ENCODE measurements at regions of chr5 and their contacts with region 1.

Region 1: DNA sequence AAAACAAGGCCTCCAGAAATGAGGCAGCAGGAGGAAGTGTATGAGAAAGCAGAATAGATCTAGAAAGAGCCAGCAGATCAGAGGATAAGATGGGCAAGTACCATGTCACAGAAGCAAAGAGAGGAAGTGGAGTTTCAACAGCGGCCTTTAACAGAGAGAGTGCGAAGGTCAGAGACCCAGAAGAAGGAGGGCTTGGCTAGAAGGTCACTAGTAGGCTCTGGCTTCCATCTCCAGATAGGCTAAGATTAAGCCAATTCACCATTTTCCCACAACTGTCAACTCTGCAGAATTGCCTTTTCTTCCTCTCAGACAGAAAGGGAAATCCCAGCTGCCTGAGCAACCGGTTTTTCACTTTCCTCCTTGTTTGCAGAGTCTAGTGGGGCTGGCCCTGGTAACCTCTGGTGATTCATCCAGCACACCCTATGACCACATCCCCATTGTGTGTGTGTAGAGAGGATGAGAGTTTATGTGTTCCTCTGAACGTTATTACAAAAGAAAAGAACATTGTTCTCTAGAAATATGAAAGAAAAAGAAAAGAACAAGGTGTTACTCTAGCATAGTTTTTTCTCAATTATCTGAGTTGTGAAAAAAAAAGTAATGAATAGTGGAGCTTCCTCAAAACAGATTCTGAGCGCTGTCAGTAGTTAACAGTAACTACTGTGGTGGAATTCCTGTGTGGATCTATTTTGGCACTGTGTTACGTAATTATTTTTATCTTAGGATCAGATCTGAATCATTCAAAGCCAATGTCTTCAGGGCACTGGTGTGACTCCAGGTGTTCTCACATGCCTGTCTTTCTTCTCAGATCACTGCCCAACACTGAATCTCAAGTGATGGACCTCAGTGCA is 220.4 kb downstream of the ARRDC3 start:
- DNase-seq: peak; percentile 78
- ATAC-seq: peak; percentile 99
- H3K4me3 ChIP-seq: no peak overlapping the region
- H3K27ac ChIP-seq: peak overlapping the region; percentile 77
- H3K4me1 ChIP-seq: peaks cover 22% of the 10 kb centered on the region
- H3K27me3 ChIP-seq: no peaks in the 10 kb centered on the region
- CTCF ChIP-seq: no peak
- EP300 ChIP-seq: peak in 1 of 2 experiments; percentile 87; a peak in 3 of 4 replicates
- POLR2A ChIP-seq: no peak
- RAD21 ChIP-seq: no peak

Region 2: GRCh38 chr5:91061946-91062562 is 100.7 kb before region 1 on chr5:
- CTCF ChIA-PET with region 1: no interaction called
- POLR2A ChIA-PET with region 1: interaction called, 3 read pairs
- RAD21 ChIA-PET with region 1: no interaction called
- SMC1A ChIA-PET with region 1: interaction called, 3 read pairs
- in situ Hi-C with region 1: no loop called
- intact Hi-C with region 1: loop called (anchors 5 kb)
- DNase-seq: no peak
- ATAC-seq: peak; percentile 48
- H3K4me3 ChIP-seq: no peak overlapping the region
- H3K27ac ChIP-seq: no peak overlapping the region
- H3K4me1 ChIP-seq: peaks cover 15% of the 10 kb centered on the region
- H3K27me3 ChIP-seq: no peaks in the 10 kb centered on the region
- CTCF ChIP-seq: no peak
- EP300 ChIP-seq: no peak
- POLR2A ChIP-seq: no peak
- RAD21 ChIP-seq: no peak

Measured in GM12878 (cell line).